ENCODE measurements at regions of chr1 and their contacts with region 1.

Region 1: GRCh38 chr1:89483010-89483756 is 41.4 kb upstream of the LRRC8B start:
- DNase-seq: no peak
- ATAC-seq: peak; percentile 74
- H3K4me3 Mint-ChIP-seq: no peak overlapping the region
- H3K27ac Mint-ChIP-seq: no peak overlapping the region
- H3K4me1 Mint-ChIP-seq: no peaks in the 10 kb centered on the region
- H3K27me3 Mint-ChIP-seq: peaks cover 4% of the 10 kb centered on the region
- CTCF ChIP-seq: no peak

Region 2: DNA sequence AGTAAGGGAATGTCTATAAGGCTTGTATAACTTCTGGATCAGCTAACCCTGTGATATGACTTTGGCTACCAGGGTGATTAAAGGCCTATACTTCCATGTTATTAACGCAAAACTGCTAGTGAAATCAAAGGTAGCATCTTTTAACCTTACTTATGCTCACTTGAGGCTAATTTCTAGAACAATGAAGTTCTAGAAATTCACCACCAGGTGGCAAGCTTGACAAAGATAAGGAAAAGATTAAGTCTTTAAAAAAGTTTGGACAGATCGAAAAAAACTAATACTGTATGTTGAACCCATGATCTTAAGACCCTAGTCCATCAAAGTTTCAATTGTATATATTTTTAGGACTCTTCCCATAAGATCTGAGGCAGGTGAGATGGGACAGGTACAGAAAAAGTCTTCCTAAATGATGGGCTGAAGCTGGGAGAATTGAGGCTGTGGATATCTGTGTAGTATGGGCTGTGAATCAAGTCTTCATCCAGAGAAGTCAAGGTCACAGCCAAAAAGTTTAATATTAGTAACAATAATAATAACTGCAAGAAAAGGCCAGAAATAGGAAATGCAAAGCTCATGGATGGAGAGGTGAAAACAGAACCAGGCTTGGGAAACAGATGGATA is 509.6 kb before region 1 on chr1:
- CTCF ChIA-PET with region 1: no interaction called
- POLR2A ChIA-PET with region 1: no interaction called
- intact Hi-C with region 1: no loop called
- DNase-seq: no peak
- ATAC-seq: no peak
- H3K4me3 Mint-ChIP-seq: no peak overlapping the region
- H3K27ac Mint-ChIP-seq: no peak overlapping the region
- H3K4me1 Mint-ChIP-seq: peaks cover 20% of the 10 kb centered on the region
- H3K27me3 Mint-ChIP-seq: no peaks in the 10 kb centered on the region
- CTCF ChIP-seq: peak; percentile 77

Region 3: DNA sequence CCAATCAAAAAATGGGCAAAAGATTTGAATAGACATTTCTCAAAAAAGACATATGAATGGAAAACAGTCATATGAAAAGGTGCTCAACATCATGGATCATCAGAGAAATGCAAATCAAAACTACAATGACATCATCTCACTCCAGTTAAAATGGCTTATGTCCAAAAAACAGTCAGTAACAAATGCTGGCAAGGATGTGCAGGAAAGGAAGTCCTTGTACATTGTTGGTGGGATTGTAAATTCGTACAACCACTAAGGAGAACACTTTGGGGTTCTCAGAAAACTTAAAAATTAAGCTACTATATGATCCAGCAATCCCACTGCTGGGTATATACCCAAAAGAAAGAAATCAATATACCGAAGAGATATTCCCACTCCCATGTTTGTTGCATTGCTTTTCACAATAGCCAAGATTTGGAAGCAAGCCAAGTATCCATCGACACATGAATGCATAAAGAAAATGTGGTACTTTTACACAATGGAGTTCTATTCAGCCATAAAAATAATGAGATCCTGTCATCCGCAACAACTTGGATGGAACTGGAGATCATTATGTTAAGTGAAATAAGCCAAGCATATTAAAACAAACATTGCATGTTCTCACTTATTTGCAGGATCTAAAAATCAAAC is 228.4 kb before region 1 on chr1:
- CTCF ChIA-PET with region 1: no interaction called
- POLR2A ChIA-PET with region 1: no interaction called
- intact Hi-C with region 1: no loop called
- DNase-seq: no peak
- ATAC-seq: no peak
- H3K4me3 Mint-ChIP-seq: no peak overlapping the region
- H3K27ac Mint-ChIP-seq: no peak overlapping the region
- H3K4me1 Mint-ChIP-seq: peaks cover 13% of the 10 kb centered on the region
- H3K27me3 Mint-ChIP-seq: no peaks in the 10 kb centered on the region
- CTCF ChIP-seq: no peak

Region 4: GRCh38 chr1:89394851-89395250 is 88.3 kb before region 1 on chr1:
- CTCF ChIA-PET with region 1: no interaction called
- POLR2A ChIA-PET with region 1: no interaction called
- intact Hi-C with region 1: no loop called
- DNase-seq: no peak
- ATAC-seq: no peak
- H3K4me3 Mint-ChIP-seq: no peak overlapping the region
- H3K27ac Mint-ChIP-seq: no peak overlapping the region
- H3K4me1 Mint-ChIP-seq: no peaks in the 10 kb centered on the region
- H3K27me3 Mint-ChIP-seq: peaks cover 2% of the 10 kb centered on the region
- CTCF ChIP-seq: no peak

Region 5: DNA sequence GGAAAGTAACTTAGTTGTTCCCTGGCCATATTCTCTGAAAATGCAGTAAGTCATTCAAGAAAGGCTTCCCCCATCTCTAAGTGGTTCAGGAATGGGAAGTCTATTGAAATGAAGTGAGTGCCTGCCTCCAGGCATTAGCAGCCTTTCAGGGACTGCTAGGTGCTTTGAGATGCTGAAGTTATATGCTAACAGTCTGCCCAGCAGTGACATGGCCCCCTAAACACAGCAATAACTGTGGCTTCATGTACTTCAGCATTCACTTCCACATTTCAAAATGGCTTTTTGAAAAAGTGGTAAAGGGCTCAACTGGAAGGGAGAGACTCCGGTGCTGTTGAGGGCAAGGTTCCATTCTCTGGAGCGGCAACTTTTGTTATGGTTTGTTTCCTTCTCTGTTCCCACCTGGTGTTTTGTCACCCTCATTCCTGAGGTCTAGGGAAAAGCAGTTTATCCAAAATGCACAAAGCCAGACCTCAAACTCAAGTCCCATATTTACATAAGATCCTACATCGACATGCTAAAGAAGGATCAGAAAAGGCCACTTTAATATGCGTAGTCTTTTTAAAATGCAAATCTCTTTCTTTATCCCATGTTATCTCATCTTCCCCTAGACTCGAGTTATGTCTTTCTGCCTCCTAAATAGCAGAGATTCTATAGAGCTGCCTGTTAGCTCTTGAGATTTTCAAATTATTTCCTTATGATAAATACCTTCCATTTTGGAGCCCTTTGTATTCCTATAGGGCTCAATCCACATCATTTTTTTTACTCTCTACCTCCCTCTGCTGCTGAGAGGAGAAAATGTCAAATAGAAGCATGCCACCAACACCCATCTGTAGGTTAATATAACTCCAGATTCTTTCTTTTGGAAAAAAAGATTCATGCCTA is 115.5 kb after region 1 on chr1:
- CTCF ChIA-PET with region 1: interaction called, 7 read pairs
- POLR2A ChIA-PET with region 1: no interaction called
- intact Hi-C with region 1: loop called (anchors 1 kb)
- DNase-seq: no peak
- ATAC-seq: peak; percentile 62
- H3K4me3 Mint-ChIP-seq: no peak overlapping the region
- H3K27ac Mint-ChIP-seq: no peak overlapping the region
- H3K4me1 Mint-ChIP-seq: peaks cover 4% of the 10 kb centered on the region
- H3K27me3 Mint-ChIP-seq: no peaks in the 10 kb centered on the region
- CTCF ChIP-seq: peak; percentile 24

Region 6: GRCh38 chr1:89804642-89805237 is 321.6 kb after region 1 on chr1:
- CTCF ChIA-PET with region 1: no interaction called
- POLR2A ChIA-PET with region 1: no interaction called
- intact Hi-C with region 1: loop called (anchors 1 kb)
- DNase-seq: peak; percentile 59
- ATAC-seq: peak; percentile 94
- H3K4me3 Mint-ChIP-seq: no peak overlapping the region
- H3K27ac Mint-ChIP-seq: no peak overlapping the region
- H3K4me1 Mint-ChIP-seq: no peaks in the 10 kb centered on the region
- H3K27me3 Mint-ChIP-seq: no peaks in the 10 kb centered on the region
- CTCF ChIP-seq: peak; percentile 92

Region 7: DNA sequence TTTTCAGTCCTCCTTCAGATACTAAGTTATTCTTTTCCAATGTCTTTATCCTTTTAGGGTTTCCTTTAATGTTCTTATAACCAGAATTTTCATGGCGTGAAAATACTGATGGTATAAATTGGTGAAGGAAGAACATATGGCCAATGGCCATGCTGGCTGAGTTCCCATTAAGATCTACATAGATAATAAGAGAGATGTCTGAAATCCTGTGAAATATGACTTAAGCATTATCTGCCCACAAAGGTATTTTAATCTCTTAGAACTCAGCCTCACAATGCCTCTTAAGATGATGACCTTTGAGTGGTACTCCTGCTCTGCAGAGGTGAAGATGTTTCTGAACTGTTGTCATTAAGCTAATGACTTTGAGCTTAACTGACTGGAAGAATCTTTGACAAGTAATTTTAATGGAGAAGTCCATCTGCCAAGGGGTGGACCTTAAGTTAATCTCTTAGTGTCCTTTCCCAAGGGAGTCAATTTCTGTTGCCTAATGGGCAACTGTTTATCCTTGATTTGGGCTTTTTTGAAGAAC is 660.4 kb after region 1 on chr1:
- CTCF ChIA-PET with region 1: no interaction called
- POLR2A ChIA-PET with region 1: no interaction called
- intact Hi-C with region 1: no loop called
- DNase-seq: no peak
- ATAC-seq: no peak
- H3K4me3 Mint-ChIP-seq: no peak overlapping the region
- H3K27ac Mint-ChIP-seq: no peak overlapping the region
- H3K4me1 Mint-ChIP-seq: no peaks in the 10 kb centered on the region
- H3K27me3 Mint-ChIP-seq: no peaks in the 10 kb centered on the region
- CTCF ChIP-seq: no peak